A549 (cell line): ENCODE measurements at regions of chr4 and their contacts with region 1.

Region 1: DNA sequence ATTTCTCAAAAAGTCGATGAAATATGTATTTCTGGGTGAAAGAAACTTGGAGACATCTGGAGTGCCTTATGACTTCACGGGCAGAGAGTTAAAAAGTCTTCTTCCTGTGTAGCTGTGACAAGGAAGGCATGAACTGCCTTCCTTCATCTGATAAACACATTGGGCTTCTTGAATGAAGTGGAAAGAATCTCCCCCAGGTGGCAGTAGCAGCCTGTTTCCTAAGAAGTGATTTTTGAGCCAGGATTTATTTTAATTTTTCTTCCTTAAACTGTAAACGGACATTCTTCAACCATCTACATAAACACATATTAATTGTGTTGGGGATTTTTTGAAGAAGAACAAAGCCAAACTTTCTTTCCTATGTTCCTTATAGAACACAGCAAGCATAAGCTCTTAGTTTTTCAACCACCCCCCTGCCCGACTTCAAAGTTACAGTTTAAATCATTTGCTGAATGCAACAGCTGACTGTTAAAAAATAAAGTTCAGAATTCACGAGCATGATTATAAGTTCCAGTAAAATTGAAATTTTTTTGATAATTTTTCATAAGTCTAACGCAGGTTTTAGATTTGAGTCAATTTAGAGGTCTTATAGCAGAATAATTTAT is 980 bp upstream of the GIMD1 start:
- DNase-seq: peak; percentile 14 to 74
- ATAC-seq: peak; percentile 72 to 81; a peak in 5 of 6 replicates
- H3K4me3 ChIP-seq: no peak overlapping the region
- H3K27ac ChIP-seq: no peak overlapping the region
- H3K4me1 ChIP-seq: peaks cover 15% of the 10 kb centered on the region
- CTCF ChIP-seq: peak; percentile 75
- EP300 ChIP-seq: no peak
- POLR2A ChIP-seq: no peak
- RAD21 ChIP-seq: peak; percentile 74 to 82

Region 2: GRCh38 chr4:106277140-106277675 is 92.3 kb before region 1 on chr4:
- CTCF ChIA-PET with region 1: no interaction called
- POLR2A ChIA-PET with region 1: no interaction called
- DNase-seq: no peak
- ATAC-seq: no peak
- H3K4me3 ChIP-seq: no peak overlapping the region
- H3K27ac ChIP-seq: no peak overlapping the region
- H3K4me1 ChIP-seq: no peaks in the 10 kb centered on the region
- CTCF ChIP-seq: no peak
- EP300 ChIP-seq: no peak
- POLR2A ChIP-seq: no peak
- RAD21 ChIP-seq: no peak

Region 3: GRCh38 chr4:106502106-106502699 is 132.6 kb after region 1 on chr4:
- CTCF ChIA-PET with region 1: interaction called, 15 read pairs
- POLR2A ChIA-PET with region 1: no interaction called
- DNase-seq: peak; percentile 18 to 47
- ATAC-seq: peak; percentile 89 to 93
- H3K4me3 ChIP-seq: no peak overlapping the region
- H3K27ac ChIP-seq: no peak overlapping the region
- H3K4me1 ChIP-seq: no peaks in the 10 kb centered on the region
- CTCF ChIP-seq: peak; percentile 55
- EP300 ChIP-seq: no peak
- POLR2A ChIP-seq: no peak
- RAD21 ChIP-seq: peak; percentile 66 to 71